Caco-2 (cell line): ENCODE measurements at regions of chr13 and their contacts with region 1.

Region 1: DNA sequence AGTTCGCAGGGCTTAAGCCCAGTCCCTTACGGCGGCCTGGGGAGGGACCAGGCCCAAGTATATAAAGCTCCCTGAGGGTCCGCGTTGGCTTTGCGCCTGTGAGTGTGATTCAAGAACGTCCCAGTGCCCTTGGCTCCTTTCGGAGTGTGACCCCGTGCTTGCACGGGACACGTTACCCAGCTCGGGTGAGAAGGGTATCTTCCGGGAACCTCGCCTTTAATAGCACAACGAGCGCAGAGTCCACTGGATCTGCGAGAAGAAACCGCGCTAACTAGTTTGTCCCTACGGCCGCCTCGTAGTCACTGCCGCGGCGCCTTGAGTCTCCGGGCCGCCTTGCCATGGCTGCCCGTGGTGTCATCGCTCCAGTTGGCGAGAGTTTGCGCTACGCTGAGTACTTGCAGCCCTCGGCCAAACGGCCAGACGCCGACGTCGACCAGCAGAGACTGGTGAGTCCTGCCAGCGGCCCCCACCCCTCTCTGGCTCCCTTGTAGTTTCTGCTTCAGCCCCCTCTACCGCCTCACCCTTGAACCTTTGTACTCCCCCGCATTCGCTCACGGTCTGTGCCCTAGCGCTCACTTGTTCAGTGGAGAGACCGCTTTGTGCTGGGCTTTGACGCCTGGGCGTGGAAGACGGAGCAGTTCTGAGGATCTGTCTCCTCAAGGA is at the start of gene DNAJC15:
- DNase-seq: peak; percentile 83 to 87
- H3K4me3 ChIP-seq: peak within 1 kb of the TSS; percentile 57
- H3K4me3 Mint-ChIP-seq: peak within 1 kb of the TSS; percentile 95
- H3K27ac Mint-ChIP-seq: peak within 1 kb of the TSS; percentile 93
- H3K4me1 ChIP-seq: peaks cover 21% of the 10 kb centered on the region
- H3K4me1 Mint-ChIP-seq: peaks cover 12% of the 10 kb centered on the region
- H3K27me3 ChIP-seq: no peaks in the 10 kb centered on the region
- H3K27me3 Mint-ChIP-seq: no peaks in the 10 kb centered on the region
- CTCF ChIP-seq: no peak
- total RNA-seq, gene DNAJC15: 71.0 and 72.2 TPM in 2 replicates

Region 2: GRCh38 chr13:42847891-42848663 is 175.3 kb before region 1 on chr13:
- CTCF ChIA-PET with region 1: no interaction called
- POLR2A ChIA-PET with region 1: no interaction called
- intact Hi-C with region 1: no loop called
- DNase-seq: no peak
- H3K4me3 ChIP-seq: no peak overlapping the region
- H3K4me3 Mint-ChIP-seq: no peak overlapping the region
- H3K27ac Mint-ChIP-seq: no peak overlapping the region
- H3K4me1 ChIP-seq: no peaks in the 10 kb centered on the region
- H3K4me1 Mint-ChIP-seq: no peaks in the 10 kb centered on the region
- H3K27me3 ChIP-seq: no peaks in the 10 kb centered on the region
- H3K27me3 Mint-ChIP-seq: peaks cover 16% of the 10 kb centered on the region
- CTCF ChIP-seq: no peak

Region 3: GRCh38 chr13:42991892-42992763 is 31.3 kb before region 1 on chr13 and contains the start of gene EPSTI1:
- CTCF ChIA-PET with region 1: interaction called, 4 read pairs
- POLR2A ChIA-PET with region 1: interaction called, 8 read pairs
- intact Hi-C with region 1: loop called (anchors 2 kb)
- DNase-seq: peak; percentile 84 to 92
- H3K4me3 ChIP-seq: peak within 1 kb of the TSS; percentile 59
- H3K4me3 Mint-ChIP-seq: peak within 1 kb of the TSS; percentile 91
- H3K27ac Mint-ChIP-seq: peak within 1 kb of the TSS; percentile 91
- H3K4me1 ChIP-seq: peaks cover 49% of the 10 kb centered on the region
- H3K4me1 Mint-ChIP-seq: peaks cover 33% of the 10 kb centered on the region
- H3K27me3 ChIP-seq: no peaks in the 10 kb centered on the region
- H3K27me3 Mint-ChIP-seq: no peaks in the 10 kb centered on the region
- CTCF ChIP-seq: no peak
- total RNA-seq, gene EPSTI1: 80.6 and 86.5 TPM in 2 replicates

Region 4: GRCh38 chr13:43006893-43007631 is 16.4 kb before region 1 on chr13:
- CTCF ChIA-PET with region 1: interaction called, 3 read pairs
- POLR2A ChIA-PET with region 1: no interaction called
- intact Hi-C with region 1: loop called (anchors 2 kb)
- DNase-seq: no peak
- H3K4me3 ChIP-seq: no peak overlapping the region
- H3K4me3 Mint-ChIP-seq: peak overlapping the region; percentile 15
- H3K27ac Mint-ChIP-seq: peak overlapping the region; percentile 85
- H3K4me1 ChIP-seq: peaks cover 49% of the 10 kb centered on the region
- H3K4me1 Mint-ChIP-seq: peaks cover 60% of the 10 kb centered on the region
- H3K27me3 ChIP-seq: no peaks in the 10 kb centered on the region
- H3K27me3 Mint-ChIP-seq: no peaks in the 10 kb centered on the region
- CTCF ChIP-seq: no peak

Region 5: DNA sequence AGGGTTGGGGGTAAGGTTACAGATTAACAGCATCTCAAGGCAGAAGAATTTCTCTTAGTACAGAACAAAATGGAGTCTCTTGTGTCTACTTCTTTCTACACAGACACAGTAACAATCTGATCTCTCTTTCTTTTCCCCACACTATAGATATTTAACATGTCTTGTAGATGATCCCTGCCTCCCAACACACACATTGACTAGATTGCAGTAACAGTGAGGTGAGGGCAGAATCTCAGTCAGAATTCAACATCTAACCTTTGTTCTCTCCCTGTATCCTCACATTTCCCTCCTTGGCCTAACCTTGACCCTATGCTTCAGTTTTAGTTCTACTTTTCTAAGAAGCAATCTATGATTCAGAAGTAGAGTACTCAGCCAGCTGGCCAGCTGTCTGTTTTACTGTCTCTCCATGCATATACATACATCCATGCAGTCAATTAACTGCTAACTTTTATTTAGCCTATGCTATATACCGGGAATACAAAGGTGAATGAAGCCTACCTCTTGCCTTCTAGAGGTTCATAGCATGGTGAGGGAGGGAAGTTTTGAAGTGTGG is 18.0 kb after region 1 on chr13:
- CTCF ChIA-PET with region 1: no interaction called
- POLR2A ChIA-PET with region 1: interaction called, 3 read pairs
- intact Hi-C with region 1: loop called (anchors 2 kb)
- DNase-seq: no peak
- H3K4me3 ChIP-seq: no peak overlapping the region
- H3K4me3 Mint-ChIP-seq: peak overlapping the region; percentile 68
- H3K27ac Mint-ChIP-seq: peak overlapping the region; percentile 78
- H3K4me1 ChIP-seq: peaks cover 85% of the 10 kb centered on the region
- H3K4me1 Mint-ChIP-seq: peaks cover 74% of the 10 kb centered on the region
- H3K27me3 ChIP-seq: no peaks in the 10 kb centered on the region
- H3K27me3 Mint-ChIP-seq: no peaks in the 10 kb centered on the region
- CTCF ChIP-seq: no peak